GM12878 (cell line): ENCODE measurements at regions of chr6 and their contacts with region 1.

Region 1: GRCh38 chr6:163170294-163170883 is 244.1 kb upstream of the QKI start:
- DNase-seq: no peak
- ATAC-seq: peak; percentile 81
- H3K4me3 ChIP-seq: no peak overlapping the region
- H3K27ac ChIP-seq: no peak overlapping the region
- H3K4me1 ChIP-seq: no peaks in the 10 kb centered on the region
- H3K27me3 ChIP-seq: no peaks in the 10 kb centered on the region
- CTCF ChIP-seq: peak; percentile 53 to 68 (median 67)
- EP300 ChIP-seq: no peak
- POLR2A ChIP-seq: no peak
- RAD21 ChIP-seq: peak; percentile 37; the same call in 1 of the 2 replicates

Region 2: DNA sequence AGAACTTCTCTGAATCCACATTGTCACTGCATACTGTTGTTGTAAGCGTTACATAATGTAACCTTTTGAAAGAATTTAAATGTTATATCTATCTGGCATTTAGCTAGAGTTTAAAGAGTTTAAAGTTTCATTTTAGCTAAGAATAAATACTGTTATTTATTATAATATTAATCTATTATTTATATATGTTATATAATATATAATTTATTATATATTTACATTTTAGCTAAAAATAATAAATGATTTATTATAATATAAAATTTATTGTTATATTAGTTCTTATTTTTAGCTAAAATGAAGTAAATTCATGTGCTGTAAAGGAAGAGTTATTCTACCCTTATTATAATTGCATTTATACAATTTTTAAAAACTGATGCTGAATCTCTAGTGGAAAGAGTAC is 11.3 kb before region 1 on chr6:
- CTCF ChIA-PET with region 1: interaction called, 16 read pairs
- POLR2A ChIA-PET with region 1: no interaction called
- RAD21 ChIA-PET with region 1: no interaction called
- SMC1A ChIA-PET with region 1: interaction called, 3 read pairs
- in situ Hi-C with region 1: no loop called
- intact Hi-C with region 1: no loop called
- DNase-seq: no peak
- ATAC-seq: no peak
- H3K4me3 ChIP-seq: no peak overlapping the region
- H3K27ac ChIP-seq: no peak overlapping the region
- H3K4me1 ChIP-seq: no peaks in the 10 kb centered on the region
- H3K27me3 ChIP-seq: no peaks in the 10 kb centered on the region
- CTCF ChIP-seq: no peak
- EP300 ChIP-seq: no peak
- POLR2A ChIP-seq: no peak
- RAD21 ChIP-seq: no peak

Region 3: GRCh38 chr6:163180874-163181541 is 10.6 kb after region 1 on chr6:
- CTCF ChIA-PET with region 1: interaction called, 13 read pairs
- POLR2A ChIA-PET with region 1: no interaction called
- RAD21 ChIA-PET with region 1: no interaction called
- SMC1A ChIA-PET with region 1: interaction called, 3 read pairs
- in situ Hi-C with region 1: no loop called
- intact Hi-C with region 1: no loop called
- DNase-seq: no peak
- ATAC-seq: peak; percentile 67
- H3K4me3 ChIP-seq: no peak overlapping the region
- H3K27ac ChIP-seq: no peak overlapping the region
- H3K4me1 ChIP-seq: no peaks in the 10 kb centered on the region
- H3K27me3 ChIP-seq: peaks cover 0 to 2% of the 10 kb centered on the region in 2 experiments; a peak in 2 of 4 replicates
- CTCF ChIP-seq: peak; percentile 36 to 57 (median 44); a peak in 4 of 6 replicates
- EP300 ChIP-seq: no peak
- POLR2A ChIP-seq: no peak
- RAD21 ChIP-seq: peak; percentile 66

Region 4: DNA sequence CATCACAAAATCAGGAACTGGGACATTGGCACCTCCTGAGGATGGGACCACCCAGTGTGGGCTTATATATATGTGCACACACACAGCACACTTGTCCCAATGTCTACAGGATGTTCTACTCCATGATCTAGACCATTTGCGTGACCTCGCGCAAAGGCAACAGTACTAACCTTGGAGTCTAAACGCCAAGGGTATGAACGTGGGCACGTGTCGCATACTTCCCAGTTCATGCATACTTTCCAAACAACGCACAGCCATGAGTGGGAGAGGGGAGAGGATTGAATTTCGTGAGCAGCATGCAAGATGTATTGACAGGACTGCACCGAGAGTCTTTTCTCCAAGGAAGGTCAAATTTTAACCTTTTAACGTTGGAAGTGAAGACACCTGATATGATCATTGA is 29.9 kb after region 1 on chr6:
- CTCF ChIA-PET with region 1: no interaction called
- POLR2A ChIA-PET with region 1: no interaction called
- RAD21 ChIA-PET with region 1: no interaction called
- SMC1A ChIA-PET with region 1: no interaction called
- in situ Hi-C with region 1: no loop called
- intact Hi-C with region 1: no loop called
- DNase-seq: no peak
- ATAC-seq: no peak
- H3K4me3 ChIP-seq: no peak overlapping the region
- H3K27ac ChIP-seq: no peak overlapping the region
- H3K4me1 ChIP-seq: no peaks in the 10 kb centered on the region
- H3K27me3 ChIP-seq: no peaks in the 10 kb centered on the region; a peak in 1 of 4 replicates
- CTCF ChIP-seq: no peak
- EP300 ChIP-seq: no peak
- POLR2A ChIP-seq: no peak
- RAD21 ChIP-seq: no peak

Region 5: GRCh38 chr6:163554663-163555062 is 384.3 kb after region 1 on chr6:
- CTCF ChIA-PET with region 1: no interaction called
- POLR2A ChIA-PET with region 1: no interaction called
- RAD21 ChIA-PET with region 1: no interaction called
- SMC1A ChIA-PET with region 1: interaction called, 3 read pairs
- in situ Hi-C with region 1: no loop called
- intact Hi-C with region 1: loop called (anchors 10 kb)
- DNase-seq: no peak
- ATAC-seq: peak; percentile 84
- H3K4me3 ChIP-seq: no peak overlapping the region
- H3K27ac ChIP-seq: no peak overlapping the region
- H3K4me1 ChIP-seq: no peaks in the 10 kb centered on the region; the same call in 1 of the 2 replicates
- H3K27me3 ChIP-seq: no peaks in the 10 kb centered on the region
- CTCF ChIP-seq: peak; percentile 49 to 55 (median 51); a peak in 5 of 6 replicates
- EP300 ChIP-seq: no peak
- POLR2A ChIP-seq: no peak
- RAD21 ChIP-seq: peak; percentile 66